Caco-2 (cell line): ENCODE measurements at regions of chr1 and their contacts with region 1.

Region 1: DNA sequence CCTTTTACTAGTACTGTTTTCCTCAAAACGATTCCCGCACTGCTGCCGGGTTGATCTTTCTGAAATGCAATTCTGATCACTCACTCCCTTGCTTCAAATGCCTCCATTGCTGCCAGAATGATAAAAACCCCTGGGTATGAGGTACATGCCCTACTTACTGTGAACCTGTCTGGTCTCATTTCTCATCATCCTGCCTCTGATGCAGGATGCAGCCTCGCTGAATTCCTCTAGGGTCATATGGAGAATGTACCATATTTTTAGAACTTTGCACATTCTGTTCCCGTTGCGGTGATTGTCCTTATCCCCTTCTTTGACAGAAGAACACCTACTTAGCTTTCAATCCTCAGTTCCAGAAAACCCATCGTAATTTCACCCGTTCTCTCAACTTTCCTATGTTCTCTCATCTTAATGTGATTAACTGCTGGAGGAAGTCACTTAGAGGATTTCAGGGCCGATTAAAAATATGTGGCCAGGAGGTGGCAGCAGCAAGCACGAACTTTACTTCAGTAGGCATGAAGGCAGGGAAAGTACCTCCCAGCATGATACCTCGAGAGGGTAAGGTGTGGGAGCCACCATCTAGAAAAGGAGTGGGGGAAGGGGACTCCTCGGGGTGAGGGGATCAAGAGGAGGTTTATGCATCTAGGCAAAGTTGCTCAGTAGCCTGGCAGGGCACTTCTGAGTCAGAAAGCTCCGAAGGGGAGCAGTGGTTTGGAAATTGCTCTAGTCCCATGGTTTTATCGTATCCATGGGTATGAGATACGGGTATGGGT is 361.5 kb upstream of the ZP4 start:
- DNase-seq: peak; percentile 45 to 48
- H3K4me3 ChIP-seq: no peak overlapping the region
- H3K4me3 Mint-ChIP-seq: no peak overlapping the region
- H3K27ac Mint-ChIP-seq: no peak overlapping the region
- H3K4me1 ChIP-seq: no peaks in the 10 kb centered on the region
- H3K4me1 Mint-ChIP-seq: no peaks in the 10 kb centered on the region
- H3K27me3 ChIP-seq: no peaks in the 10 kb centered on the region
- H3K27me3 Mint-ChIP-seq: peaks cover 5% of the 10 kb centered on the region
- CTCF ChIP-seq: peak; percentile 49

Region 2: GRCh38 chr1:238690415-238690814 is 438.2 kb after region 1 on chr1:
- CTCF ChIA-PET with region 1: no interaction called
- POLR2A ChIA-PET with region 1: no interaction called
- intact Hi-C with region 1: loop called (anchors 5 kb)
- DNase-seq: no peak
- H3K4me3 ChIP-seq: no peak overlapping the region
- H3K4me3 Mint-ChIP-seq: no peak overlapping the region
- H3K27ac Mint-ChIP-seq: no peak overlapping the region
- H3K4me1 ChIP-seq: no peaks in the 10 kb centered on the region
- H3K4me1 Mint-ChIP-seq: no peaks in the 10 kb centered on the region
- H3K27me3 ChIP-seq: no peaks in the 10 kb centered on the region
- H3K27me3 Mint-ChIP-seq: peaks cover 5% of the 10 kb centered on the region
- CTCF ChIP-seq: no peak